Heart right ventricle (tissue), 16 donors: ENCODE measurements at regions of chr9 and their contacts with region 1.

Region 1: DNA sequence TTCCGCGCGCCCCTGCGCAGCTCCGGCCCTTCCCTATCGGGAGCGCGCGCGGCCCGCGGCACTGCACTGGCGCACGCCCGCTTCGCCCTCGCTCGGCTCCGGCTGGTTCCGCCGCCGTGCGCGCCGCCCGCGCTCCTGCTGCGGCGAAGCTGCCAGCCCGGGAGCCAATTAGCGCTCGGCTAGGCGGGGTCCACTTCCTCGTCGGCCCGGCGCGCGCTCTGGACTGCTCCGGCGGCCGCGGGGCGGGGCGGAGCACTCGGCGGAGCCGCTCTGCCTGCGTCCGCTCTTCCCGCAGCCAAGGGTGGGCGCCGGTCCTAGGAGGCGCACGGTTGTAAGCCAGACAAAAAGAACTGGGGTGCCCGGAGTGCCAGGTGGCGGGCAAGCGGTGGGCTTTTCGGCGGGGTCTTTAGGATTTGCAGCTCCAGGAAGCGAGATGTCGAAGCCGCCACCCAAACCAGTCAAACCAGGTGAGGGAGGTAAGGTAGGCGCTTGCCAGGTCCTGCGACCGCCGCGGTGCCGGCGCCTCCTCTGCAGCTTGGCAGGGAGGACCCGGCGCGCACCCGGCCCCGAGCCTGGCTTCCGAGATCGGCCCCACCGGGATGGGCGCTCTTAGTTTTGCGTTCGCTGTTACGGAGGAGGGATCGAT is at the start of gene OSTF1:
- DNase-seq: peak; percentile 95 to 97
- ATAC-seq: peak; percentile 94 to 99 (median 94)
- H3K4me3 ChIP-seq: peak within 1 kb of the TSS; percentile 66 to 99 (median 93)
- H3K27ac ChIP-seq: peak within 1 kb of the TSS; percentile 78 to 99 (median 95)
- H3K4me1 ChIP-seq: peaks cover 0 to 79% (median 54%) of the 10 kb centered on the region in 9 donors
- H3K27me3 ChIP-seq: no peaks in the 10 kb centered on the region
- CTCF ChIP-seq: peak in 2 of 9 donors; percentile 7 to 16
- total RNA-seq, gene OSTF1: 15.8 to 37.7 (median 20.7) TPM

Region 2: DNA sequence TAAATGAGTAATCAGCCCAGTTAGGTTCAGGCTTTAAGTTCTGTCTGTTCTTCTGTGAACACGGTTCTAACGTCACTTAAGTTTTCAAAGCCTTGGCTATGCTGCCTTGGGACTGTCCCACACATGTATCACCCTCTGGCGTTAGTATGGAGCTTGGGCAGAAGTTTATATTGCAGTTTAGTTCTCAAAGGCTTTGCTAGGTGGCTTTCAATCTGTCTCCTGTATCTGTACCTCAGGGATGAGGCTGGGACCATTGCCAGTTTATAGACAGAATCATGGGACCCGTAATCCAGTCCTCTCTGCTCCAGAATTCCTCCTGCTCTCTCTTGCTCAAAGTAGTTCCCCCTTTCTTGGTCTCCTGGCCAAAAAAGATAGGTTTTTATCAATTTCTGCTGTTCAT is 147.8 kb before region 1 on chr9:
- intact Hi-C with region 1: loop called in 1 of 10 experiments (anchors 10 kb)
- DNase-seq: no peak
- ATAC-seq: peak in 2 of 8 donors; percentile 47 to 66
- H3K4me3 ChIP-seq: no peak overlapping the region
- H3K27ac ChIP-seq: no peak overlapping the region
- H3K4me1 ChIP-seq: no peaks in the 10 kb centered on the region
- H3K27me3 ChIP-seq: no peaks in the 10 kb centered on the region
- CTCF ChIP-seq: peak in 5 of 9 donors; percentile 11 to 43 (median 27)

Region 3: DNA sequence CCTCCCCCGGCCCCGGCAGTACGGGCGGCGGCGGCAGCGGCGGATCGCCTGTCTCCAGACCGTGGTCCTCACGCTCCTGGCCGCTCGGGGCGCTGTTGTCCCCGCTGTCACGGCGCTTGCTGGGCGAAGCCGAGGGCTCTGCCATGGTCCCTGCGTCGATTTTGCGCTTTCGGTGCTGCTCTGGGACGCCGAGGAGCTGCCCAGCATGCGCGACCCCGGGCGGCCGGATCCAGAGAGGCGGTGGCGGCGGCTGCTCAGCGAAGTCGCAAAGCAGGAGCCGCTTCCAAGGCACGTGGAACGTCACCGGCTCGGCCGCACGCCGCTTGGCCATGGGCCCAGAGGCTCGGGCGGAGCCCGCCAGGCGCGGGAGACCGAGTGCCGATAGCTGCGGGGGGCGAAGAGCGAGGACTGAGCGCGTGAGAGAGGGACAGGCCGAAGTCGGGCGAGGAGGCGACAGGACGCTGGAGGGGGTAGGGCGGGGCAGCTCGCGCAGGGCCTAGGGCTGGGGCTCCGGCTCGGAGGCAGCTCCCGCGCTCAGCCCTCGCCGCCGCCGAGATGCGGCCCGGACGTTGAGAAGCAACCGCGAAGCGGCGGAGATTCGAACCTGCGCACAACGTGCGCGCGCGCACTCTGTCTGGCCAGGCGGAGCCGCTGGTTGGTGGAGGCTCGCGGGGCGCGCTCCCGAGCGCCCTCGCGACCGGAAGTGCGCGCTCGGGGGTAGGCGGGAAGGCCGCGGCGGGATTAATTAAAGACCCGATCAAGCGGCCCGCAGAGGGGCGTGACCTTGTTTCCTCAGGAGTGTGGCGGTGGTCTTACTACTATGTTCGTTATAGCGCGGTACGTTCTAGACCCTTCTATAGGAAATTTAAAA is 135.9 kb before region 1 on chr9 and contains the start of gene C9orf40:
- intact Hi-C with region 1: loop called in 3 of 10 experiments (anchors 5 to 10 kb)
- DNase-seq: peak; percentile 91 to 93
- ATAC-seq: peak; percentile 95 to 99 (median 98)
- H3K4me3 ChIP-seq: peak within 1 kb of the TSS; percentile 60 to 98 (median 88)
- H3K27ac ChIP-seq: peak within 1 kb of the TSS; percentile 85 to 99 (median 96)
- H3K4me1 ChIP-seq: peaks cover 0 to 27% (median 17%) of the 10 kb centered on the region in 9 donors
- H3K27me3 ChIP-seq: no peaks in the 10 kb centered on the region
- CTCF ChIP-seq: peak; percentile 76 to 92 (median 86)
- total RNA-seq, gene C9orf40: 0.96 to 2.9 (median 1.9) TPM

Region 4: DNA sequence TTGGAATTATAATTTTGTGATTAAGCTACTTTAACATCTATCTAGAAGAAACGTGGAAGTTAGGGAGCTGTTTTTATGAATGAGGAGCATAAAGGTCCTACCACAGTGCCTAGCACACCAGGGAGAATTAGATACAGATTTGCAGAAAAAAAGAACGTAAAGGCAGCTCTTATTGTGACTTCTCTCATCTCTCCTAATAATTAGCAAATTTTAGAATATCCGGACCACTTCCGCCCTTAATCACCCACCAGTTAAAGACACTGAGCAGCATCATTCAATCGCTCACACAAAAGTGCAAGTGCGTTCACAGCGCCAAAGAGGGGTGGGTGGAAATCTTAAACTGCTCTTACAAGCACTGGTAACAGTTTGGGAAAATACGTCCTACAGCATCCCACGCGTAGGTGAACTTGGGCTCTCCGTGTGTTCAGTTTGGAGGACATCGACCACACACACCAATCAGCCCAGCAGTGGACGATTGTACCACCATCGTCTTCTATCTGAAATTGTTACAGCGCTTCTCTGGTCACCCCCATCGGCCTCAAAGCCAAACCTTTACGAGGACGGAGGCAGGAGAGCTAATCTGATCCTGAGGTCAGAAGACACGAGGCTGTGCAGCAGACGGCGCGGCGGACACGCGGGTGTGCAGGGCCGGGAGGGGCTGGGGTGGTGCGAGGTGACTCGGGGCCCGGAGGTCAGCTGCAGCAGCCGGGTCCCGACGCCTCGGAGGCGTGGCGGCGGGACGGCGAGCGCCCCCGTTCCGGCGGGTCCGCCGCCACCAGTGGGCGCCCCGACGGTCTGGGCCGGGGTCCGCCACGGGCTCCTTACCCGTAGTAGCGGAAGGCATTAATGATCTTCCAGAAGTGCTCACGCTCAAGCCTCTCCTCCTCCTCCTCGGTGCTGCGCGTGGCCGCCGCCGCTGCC is 60.9 kb before region 1 on chr9:
- intact Hi-C with region 1: loop called in 3 of 10 experiments (anchors 1 to 10 kb)
- DNase-seq: peak; percentile 52 to 65
- ATAC-seq: peak; percentile 53 to 78 (median 66)
- H3K4me3 ChIP-seq: peak overlapping the region; percentile 63 to 90 (median 80)
- H3K27ac ChIP-seq: peak overlapping the region; percentile 52 to 98 (median 92)
- H3K4me1 ChIP-seq: peaks cover 0 to 28% (median 17%) of the 10 kb centered on the region in 9 donors
- H3K27me3 ChIP-seq: no peaks in the 10 kb centered on the region
- CTCF ChIP-seq: no peak

Region 5: DNA sequence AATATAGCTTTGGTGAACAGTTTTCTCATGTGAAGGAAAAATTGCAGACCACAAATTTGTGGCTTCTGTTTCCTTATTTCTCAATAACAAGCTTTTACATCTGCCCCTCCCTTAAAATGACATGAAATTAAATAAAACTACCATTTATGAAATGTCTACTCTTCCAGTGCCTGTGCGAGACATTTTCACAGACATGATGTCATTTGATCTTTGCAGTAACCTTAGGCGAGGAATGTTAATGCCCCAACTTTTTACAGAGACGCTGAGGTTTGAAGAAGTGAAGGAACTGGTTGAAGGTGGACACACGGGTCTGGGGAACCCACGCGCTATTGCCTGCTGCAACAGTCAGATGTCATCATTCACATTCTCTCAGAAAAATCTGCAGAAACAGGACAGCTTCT is 61.5 kb after region 1 on chr9:
- intact Hi-C with region 1: loop called in 1 of 10 experiments (anchors 5 kb)
- DNase-seq: no peak
- ATAC-seq: peak in 1 of 8 donors; percentile 33
- H3K4me3 ChIP-seq: no peak overlapping the region
- H3K27ac ChIP-seq: peak overlapping the region in 1 of 10 donors; percentile 62
- H3K4me1 ChIP-seq: peaks cover 0 to 70% (median 15%) of the 10 kb centered on the region in 9 donors
- H3K27me3 ChIP-seq: no peaks in the 10 kb centered on the region
- CTCF ChIP-seq: no peak

Region 6: GRCh38 chr9:75169658-75170096 is 81.3 kb after region 1 on chr9:
- intact Hi-C with region 1: loop called in 1 of 10 experiments (anchors 5 kb)
- DNase-seq: no peak
- ATAC-seq: peak in 5 of 8 donors; percentile 16 to 54 (median 53)
- H3K4me3 ChIP-seq: no peak overlapping the region
- H3K27ac ChIP-seq: peak overlapping the region in 6 of 10 donors; percentile 1 to 67 (median 30)
- H3K4me1 ChIP-seq: peaks cover 0 to 13% (median 3%) of the 10 kb centered on the region in 9 donors
- H3K27me3 ChIP-seq: no peaks in the 10 kb centered on the region
- CTCF ChIP-seq: no peak

Region 7: GRCh38 chr9:76393963-76394679 is 1305.7 kb after region 1 on chr9 and contains the start of gene RFK:
- intact Hi-C with region 1: loop called in 1 of 10 experiments (anchors 10 kb)
- DNase-seq: peak; percentile 94 to 96
- ATAC-seq: peak; percentile 97 to 99 (median 98)
- H3K4me3 ChIP-seq: peak within 1 kb of the TSS; percentile 81 to 98 (median 94)
- H3K27ac ChIP-seq: peak within 1 kb of the TSS; percentile 85 to 98 (median 90)
- H3K4me1 ChIP-seq: peaks cover 0 to 42% (median 29%) of the 10 kb centered on the region in 9 donors
- H3K27me3 ChIP-seq: no peaks in the 10 kb centered on the region
- CTCF ChIP-seq: peak in 8 of 9 donors; percentile 21 to 68 (median 47)
- total RNA-seq, gene RFK: 14.6 to 33.6 (median 21.6) TPM